AG04449 (cell line): ENCODE measurements at regions of chr7 and their contacts with region 1.

Region 1: DNA sequence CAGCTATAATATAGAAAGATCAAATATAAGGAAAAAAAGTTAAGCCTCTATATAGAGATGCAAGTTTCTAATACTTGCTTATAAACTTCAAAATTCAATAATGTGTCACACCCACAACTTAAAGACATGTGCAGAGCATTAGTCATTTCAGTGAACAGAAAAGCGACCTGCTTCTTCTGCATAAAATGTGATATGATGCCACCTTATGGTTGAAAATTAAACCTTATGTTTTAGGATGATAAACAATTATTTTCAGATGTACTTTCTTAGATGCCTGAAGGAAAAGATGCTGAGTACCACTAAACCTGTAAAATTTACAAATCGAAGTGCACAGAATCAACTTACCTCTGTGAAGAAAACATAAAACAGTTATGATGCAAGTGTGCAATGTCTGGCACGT is 96.0 kb downstream of the MTERF1 start:
- DNase-seq: peak; percentile 7
- H3K4me3 ChIP-seq: no peak overlapping the region
- CTCF ChIP-seq: peak; percentile 5

Region 2: DNA sequence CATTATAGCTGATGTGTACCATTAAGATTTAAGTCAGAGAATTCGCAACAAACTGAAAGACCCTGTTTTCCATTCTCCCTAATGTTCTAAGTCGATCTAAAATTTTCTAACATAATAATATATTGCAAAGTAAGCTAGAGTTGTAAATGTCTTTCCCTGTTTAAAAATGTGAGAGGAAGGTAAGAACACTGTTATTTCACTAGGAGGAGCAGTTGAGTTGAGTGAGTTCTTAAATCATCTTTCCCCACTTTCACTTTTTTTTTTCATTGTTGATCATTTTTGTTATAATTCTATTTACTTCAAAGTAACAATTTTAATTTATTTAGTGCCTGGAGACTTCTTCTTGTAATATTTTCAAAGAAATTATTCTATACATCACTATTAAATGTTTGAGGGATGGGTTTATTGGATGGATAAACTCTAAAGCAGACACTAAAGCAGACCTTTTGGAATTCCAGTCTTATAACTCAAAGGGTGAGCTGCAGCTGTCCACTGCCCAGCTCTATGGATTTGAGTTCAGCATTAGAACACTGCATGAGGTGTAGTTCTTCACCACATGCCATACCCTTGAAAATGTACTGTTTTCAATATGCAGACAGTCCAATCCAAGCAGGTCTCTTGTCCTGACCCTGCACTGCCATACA is 701.5 kb before region 1 on chr7:
- CTCF ChIA-PET with region 1: interaction called, 13 read pairs
- POLR2A ChIA-PET with region 1: no interaction called
- DNase-seq: no peak
- H3K4me3 ChIP-seq: no peak overlapping the region
- CTCF ChIP-seq: peak; percentile 41

Region 3: GRCh38 chr7:91089382-91089963 is 695.0 kb before region 1 on chr7:
- CTCF ChIA-PET with region 1: interaction called, 13 read pairs
- POLR2A ChIA-PET with region 1: no interaction called
- DNase-seq: no peak
- H3K4me3 ChIP-seq: no peak overlapping the region; the same call in 1 of the 2 replicates
- CTCF ChIP-seq: peak; percentile 40